Activated CD4-positive, alpha-beta T cell treated with anti-CD3 and anti-CD28 coated beads, Interleukin-2, amount 10 ng/mL, durations not matched to agents 24 days and 14 days (primary cell): ENCODE measurements at regions of chr12 and their contacts with region 1.

Region 1: GRCh38 chr12:46259713-46260112 is 9.1 kb downstream of the SLC38A1 start:
- DNase-seq: no peak
- H3K4me3 Mint-ChIP-seq: no peak overlapping the region
- H3K27ac Mint-ChIP-seq: no peak overlapping the region
- H3K4me1 Mint-ChIP-seq: peaks cover 39% of the 10 kb centered on the region
- H3K27me3 Mint-ChIP-seq: no peaks in the 10 kb centered on the region

Region 2: GRCh38 chr12:45898094-45898493 is 361.6 kb before region 1 on chr12:
- intact Hi-C with region 1: no loop called
- DNase-seq: no peak
- H3K4me3 Mint-ChIP-seq: no peak overlapping the region
- H3K27ac Mint-ChIP-seq: no peak overlapping the region
- H3K4me1 Mint-ChIP-seq: peaks cover 9% of the 10 kb centered on the region
- H3K27me3 Mint-ChIP-seq: no peaks in the 10 kb centered on the region

Region 3: DNA sequence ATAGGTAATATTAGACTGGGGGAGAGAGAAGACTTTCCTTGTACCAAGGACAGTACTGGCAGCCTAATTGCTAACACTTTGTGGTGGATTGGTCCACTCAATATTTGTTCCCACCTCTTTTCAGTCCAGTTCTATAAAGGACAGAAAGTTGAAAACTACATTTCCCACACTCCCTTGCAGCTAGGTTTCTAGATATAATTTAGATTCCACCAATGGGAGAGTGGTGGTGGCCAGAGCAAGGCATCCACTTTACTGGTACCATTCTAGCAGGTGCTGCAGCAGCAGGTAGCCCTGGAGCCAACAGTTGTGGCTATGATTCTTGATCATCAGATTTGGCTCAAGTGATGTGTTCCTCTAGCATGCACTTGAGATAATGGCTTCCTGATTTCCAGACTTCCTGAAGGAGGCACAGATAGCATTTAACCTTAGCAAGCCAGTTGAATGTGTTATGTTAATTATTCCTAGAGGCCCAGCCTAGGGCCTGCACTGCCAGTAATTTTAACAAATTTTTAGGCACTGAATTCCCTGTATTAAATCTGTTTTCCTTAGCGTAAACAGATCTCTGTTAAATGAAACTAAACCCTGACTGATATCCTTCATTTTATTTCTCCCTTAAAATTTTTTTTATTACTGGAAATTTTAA is 15.3 kb before region 1 on chr12:
- intact Hi-C with region 1: loop called (anchors 2 kb)
- DNase-seq: no peak
- H3K4me3 Mint-ChIP-seq: no peak overlapping the region
- H3K27ac Mint-ChIP-seq: peak overlapping the region; percentile 2
- H3K4me1 Mint-ChIP-seq: peaks cover 49% of the 10 kb centered on the region
- H3K27me3 Mint-ChIP-seq: no peaks in the 10 kb centered on the region

Region 4: GRCh38 chr12:46357438-46358324 is 98.0 kb after region 1 on chr12:
- intact Hi-C with region 1: no loop called
- DNase-seq: no peak
- H3K4me3 Mint-ChIP-seq: no peak overlapping the region
- H3K27ac Mint-ChIP-seq: peak overlapping the region; percentile 13
- H3K4me1 Mint-ChIP-seq: peaks cover 33% of the 10 kb centered on the region
- H3K27me3 Mint-ChIP-seq: no peaks in the 10 kb centered on the region

Region 5: GRCh38 chr12:46647034-46647433 is 387.3 kb after region 1 on chr12:
- intact Hi-C with region 1: no loop called
- DNase-seq: no peak
- H3K4me3 Mint-ChIP-seq: no peak overlapping the region
- H3K27ac Mint-ChIP-seq: no peak overlapping the region
- H3K4me1 Mint-ChIP-seq: no peaks in the 10 kb centered on the region
- H3K27me3 Mint-ChIP-seq: no peaks in the 10 kb centered on the region